IMR-90 (cell line): ENCODE measurements at regions of chr10 and their contacts with region 1.

Region 1: GRCh38 chr10:99742701-99743100 is 10.7 kb downstream of the CUTC start:
- DNase-seq: peak; percentile 48
- ATAC-seq: peak; percentile 33
- H3K4me3 ChIP-seq: no peak overlapping the region
- H3K27ac ChIP-seq: no peak overlapping the region
- H3K4me1 ChIP-seq: peaks cover 8% of the 10 kb centered on the region
- H3K27me3 ChIP-seq: no peaks in the 10 kb centered on the region
- CTCF ChIP-seq: no peak
- POLR2A ChIP-seq: no peak
- RAD21 ChIP-seq: no peak

Region 2: DNA sequence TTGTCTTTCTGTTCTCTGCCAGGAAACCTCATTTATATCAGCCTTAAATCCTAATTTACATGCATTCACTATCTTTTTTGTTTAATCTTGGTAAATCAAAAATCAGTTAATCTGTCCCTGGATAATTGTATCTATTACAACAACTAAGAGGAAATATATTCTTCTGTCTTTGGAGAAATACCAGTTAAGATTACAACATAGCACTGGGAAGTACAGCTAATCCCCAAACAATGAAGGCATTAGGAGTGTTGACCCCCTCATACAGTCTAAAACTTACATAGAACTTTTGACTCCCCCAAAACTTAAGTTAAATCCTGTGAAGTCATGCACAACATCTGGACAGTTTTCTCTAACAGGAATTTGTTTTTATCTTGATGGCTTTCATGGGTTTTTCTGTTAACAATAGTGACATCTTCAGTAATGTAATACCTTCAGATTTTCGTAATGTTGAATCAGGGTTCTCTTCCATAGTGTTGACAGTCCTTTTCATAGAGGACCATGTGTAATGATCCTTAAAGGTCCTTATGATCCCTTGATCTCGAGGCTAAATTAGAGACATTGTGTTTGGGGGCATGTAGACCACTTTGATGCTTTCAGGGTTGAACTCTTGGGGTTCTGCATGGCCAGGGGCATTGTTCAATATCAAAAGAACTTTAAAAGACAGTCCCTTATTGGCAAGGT is 15.7 kb after region 1 on chr10:
- CTCF ChIA-PET with region 1: no interaction called
- POLR2A ChIA-PET with region 1: no interaction called
- dilution Hi-C with region 1: no loop called
- in situ Hi-C with region 1: no loop called
- intact Hi-C with region 1: no loop called
- DNase-seq: peak; percentile 49
- ATAC-seq: peak; percentile 56
- H3K4me3 ChIP-seq: no peak overlapping the region
- H3K27ac ChIP-seq: peak overlapping the region; percentile 52; the same call in 1 of the 2 replicates
- H3K4me1 ChIP-seq: no peaks in the 10 kb centered on the region; the same call in 1 of the 2 replicates
- H3K27me3 ChIP-seq: no peaks in the 10 kb centered on the region
- CTCF ChIP-seq: no peak
- POLR2A ChIP-seq: no peak
- RAD21 ChIP-seq: no peak

Region 3: DNA sequence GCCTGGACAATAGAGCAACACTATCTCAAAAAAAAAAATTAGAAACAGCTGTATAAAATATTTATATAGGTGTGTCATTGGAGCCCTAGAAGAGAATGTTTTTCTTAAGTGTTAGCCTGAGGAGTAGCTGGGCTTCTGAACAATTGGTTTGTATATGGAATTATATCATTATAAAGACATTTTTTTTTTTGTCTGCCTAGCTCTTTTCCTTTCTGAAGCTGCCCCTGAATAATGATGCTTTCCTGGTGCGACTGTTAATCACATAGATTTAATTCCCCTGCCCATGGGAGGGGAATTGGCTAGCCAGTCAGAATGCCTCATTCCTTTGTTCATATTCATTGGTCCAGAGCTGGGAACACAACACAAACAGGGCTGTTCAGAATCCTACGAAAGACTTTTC is 25.9 kb after region 1 on chr10:
- CTCF ChIA-PET with region 1: no interaction called
- POLR2A ChIA-PET with region 1: interaction called, 12 read pairs
- dilution Hi-C with region 1: no loop called
- in situ Hi-C with region 1: no loop called
- intact Hi-C with region 1: no loop called
- DNase-seq: peak; percentile 53
- ATAC-seq: peak; percentile 71
- H3K4me3 ChIP-seq: no peak overlapping the region
- H3K27ac ChIP-seq: no peak overlapping the region
- H3K4me1 ChIP-seq: peaks cover 4% of the 10 kb centered on the region; the same call in 1 of the 2 replicates
- H3K27me3 ChIP-seq: no peaks in the 10 kb centered on the region
- CTCF ChIP-seq: no peak
- POLR2A ChIP-seq: no peak
- RAD21 ChIP-seq: no peak